ENCODE measurements at regions of chr4 and their contacts with region 1.

Region 1: DNA sequence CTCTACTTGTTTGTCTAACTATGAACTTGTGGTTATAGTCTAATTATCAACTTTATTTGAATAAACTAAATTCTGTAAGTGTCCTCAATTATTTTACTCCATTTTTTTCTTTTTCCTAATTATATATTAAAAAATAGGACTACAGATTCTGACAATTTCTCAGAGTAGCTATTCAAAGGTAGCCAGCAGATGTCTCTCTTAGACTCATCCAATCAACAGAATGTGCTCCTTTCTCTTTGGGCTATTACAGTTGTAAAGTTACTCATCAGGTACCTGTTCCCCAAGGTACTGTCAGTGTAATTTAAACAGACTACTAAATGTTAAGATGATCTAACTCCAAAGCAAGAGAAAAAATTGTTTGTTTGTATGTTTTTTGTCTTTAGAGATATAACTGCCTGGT is 248.6 kb downstream of the PCDH18 start:
- DNase-seq: no peak
- H3K4me3 ChIP-seq: no peak overlapping the region
- H3K27ac ChIP-seq: no peak overlapping the region
- H3K4me1 ChIP-seq: no peaks in the 10 kb centered on the region
- H3K27me3 ChIP-seq: no peaks in the 10 kb centered on the region
- CTCF ChIP-seq: peak in 2 of 3 donors; percentile 8 to 14
- EP300 ChIP-seq: no peak
- POLR2A ChIP-seq: no peak

Region 2: GRCh38 chr4:137343221-137343620 is 59.5 kb after region 1 on chr4:
- intact Hi-C with region 1: loop called in 1 of 4 experiments (anchors 2 kb)
- DNase-seq: no peak
- H3K4me3 ChIP-seq: no peak overlapping the region
- H3K27ac ChIP-seq: no peak overlapping the region
- H3K4me1 ChIP-seq: no peaks in the 10 kb centered on the region
- H3K27me3 ChIP-seq: no peaks in the 10 kb centered on the region
- CTCF ChIP-seq: no peak
- EP300 ChIP-seq: no peak
- POLR2A ChIP-seq: no peak

Measured in ovary (tissue), 10 donors.